ENCODE measurements at regions of chr6 and their contacts with region 1.

Region 1: DNA sequence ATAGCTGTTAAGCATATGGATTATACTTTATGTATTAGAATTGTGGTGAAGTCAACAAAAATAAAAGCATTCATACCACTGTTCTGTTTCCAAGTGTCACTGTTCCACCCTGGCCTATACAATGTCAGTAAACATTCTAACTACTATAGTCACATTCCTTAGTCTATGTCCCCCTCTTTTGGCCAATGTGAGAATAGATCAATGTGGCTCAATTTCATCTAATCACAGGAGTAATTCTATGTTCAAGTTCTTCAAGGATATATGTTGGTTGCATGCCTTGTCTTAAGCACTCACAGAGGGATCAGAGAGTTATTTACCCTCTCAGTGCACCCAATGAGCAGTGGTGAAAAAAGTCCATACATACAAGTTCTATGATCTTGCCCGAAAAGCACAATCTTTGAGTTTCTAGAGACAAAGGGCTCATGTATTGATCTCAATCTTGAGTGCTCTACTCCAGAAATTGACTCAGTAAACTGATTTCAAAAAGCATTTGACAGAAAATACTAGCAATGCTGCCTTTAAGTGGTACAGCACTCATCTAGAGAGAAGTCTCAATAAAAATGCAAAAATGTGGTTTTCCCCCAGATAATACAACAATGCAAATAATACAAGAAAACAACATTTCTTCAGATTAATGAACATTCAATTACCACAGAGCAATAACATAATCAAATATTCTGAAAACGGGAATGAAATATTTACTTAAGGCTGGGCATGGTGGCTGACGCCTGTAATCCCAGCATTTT is 16.5 kb downstream of the SMLR1 start:
- DNase-seq: peak in 1 of 2 donors; percentile 81
- ATAC-seq: peak; percentile 87 to 93 (median 92)
- H3K4me3 ChIP-seq: no peak overlapping the region
- H3K4me3 Mint-ChIP-seq: no peak overlapping the region
- H3K27ac ChIP-seq: no peak overlapping the region
- H3K27ac Mint-ChIP-seq: no peak overlapping the region
- H3K4me1 ChIP-seq: no peaks in the 10 kb centered on the region
- H3K4me1 Mint-ChIP-seq: peaks cover 2% of the 10 kb centered on the region in 2 donors
- H3K27me3 ChIP-seq: no peaks in the 10 kb centered on the region
- H3K27me3 Mint-ChIP-seq: no peaks in the 10 kb centered on the region
- CTCF ChIP-seq: peak; percentile 76

Region 2: GRCh38 chr6:129893640-129894039 is 950.1 kb before region 1 on chr6:
- intact Hi-C with region 1: loop called (anchors 5 kb)
- DNase-seq: peak in 1 of 2 donors; percentile 54
- ATAC-seq: peak in 1 of 3 donors; percentile 30
- H3K4me3 ChIP-seq: no peak overlapping the region
- H3K4me3 Mint-ChIP-seq: no peak overlapping the region
- H3K27ac ChIP-seq: no peak overlapping the region
- H3K27ac Mint-ChIP-seq: no peak overlapping the region
- H3K4me1 ChIP-seq: no peaks in the 10 kb centered on the region
- H3K4me1 Mint-ChIP-seq: no peaks in the 10 kb centered on the region
- H3K27me3 ChIP-seq: no peaks in the 10 kb centered on the region
- H3K27me3 Mint-ChIP-seq: peaks cover 0 to 3% of the 10 kb centered on the region in 2 donors
- CTCF ChIP-seq: peak; percentile 46

Region 3: DNA sequence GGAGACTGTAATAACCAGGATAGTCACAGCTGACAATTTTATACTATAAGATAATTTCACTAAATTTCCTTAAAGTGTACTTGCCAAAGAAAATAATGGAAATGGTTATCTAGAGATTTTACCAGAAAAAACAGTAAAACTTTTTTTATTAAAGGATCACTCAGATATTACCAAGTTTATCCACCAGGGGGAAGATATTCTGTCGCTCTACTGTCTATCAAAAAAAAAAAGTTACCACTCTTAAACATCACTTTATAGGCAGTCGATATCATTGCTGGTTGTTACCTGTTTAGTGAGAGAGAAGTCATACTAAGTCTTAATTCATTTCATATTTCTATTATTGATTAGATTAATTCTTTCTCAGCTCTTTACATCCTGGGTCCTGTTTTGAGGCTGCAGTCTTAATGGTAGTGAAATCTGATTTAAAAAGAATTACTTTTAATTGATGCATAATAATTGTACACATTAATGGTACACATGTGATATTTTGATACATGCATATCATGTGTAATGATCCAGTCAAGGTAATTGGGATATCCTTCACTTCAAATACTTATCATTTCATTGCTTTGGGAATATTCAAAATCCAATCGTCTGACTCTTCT is 806.4 kb before region 1 on chr6:
- intact Hi-C with region 1: loop called (anchors 10 kb)
- DNase-seq: peak in 1 of 2 donors; percentile 62
- ATAC-seq: peak in 2 of 3 donors; percentile 60 to 61
- H3K4me3 ChIP-seq: no peak overlapping the region
- H3K4me3 Mint-ChIP-seq: no peak overlapping the region
- H3K27ac ChIP-seq: no peak overlapping the region
- H3K27ac Mint-ChIP-seq: no peak overlapping the region
- H3K4me1 ChIP-seq: peaks cover 3% of the 10 kb centered on the region
- H3K4me1 Mint-ChIP-seq: peaks cover 25 to 36% of the 10 kb centered on the region in 2 donors
- H3K27me3 ChIP-seq: no peaks in the 10 kb centered on the region
- H3K27me3 Mint-ChIP-seq: no peaks in the 10 kb centered on the region
- CTCF ChIP-seq: peak; percentile 67

Region 4: DNA sequence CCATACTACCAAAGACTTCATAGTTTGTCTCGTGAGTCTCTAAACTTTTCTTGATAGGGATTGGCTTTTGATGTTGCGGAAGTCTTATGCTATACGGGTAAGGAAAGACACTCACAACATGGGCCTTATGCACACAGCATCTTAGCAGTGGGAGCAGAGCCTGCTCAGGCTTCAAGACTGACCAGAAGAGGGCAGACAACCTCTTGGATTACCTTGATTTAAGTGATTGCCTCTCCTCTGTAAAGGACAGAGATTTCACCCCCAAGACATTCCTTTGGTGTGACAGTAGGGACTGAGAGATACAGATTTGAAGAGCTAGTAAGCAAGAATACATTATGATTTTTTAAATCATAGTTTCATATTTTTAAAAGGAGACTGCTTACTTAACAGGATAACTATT is 549.9 kb before region 1 on chr6:
- intact Hi-C with region 1: loop called (anchors 1 kb)
- DNase-seq: peak in 1 of 2 donors; percentile 67
- ATAC-seq: peak; percentile 46 to 77 (median 69)
- H3K4me3 ChIP-seq: no peak overlapping the region
- H3K4me3 Mint-ChIP-seq: no peak overlapping the region
- H3K27ac ChIP-seq: no peak overlapping the region
- H3K27ac Mint-ChIP-seq: no peak overlapping the region
- H3K4me1 ChIP-seq: no peaks in the 10 kb centered on the region
- H3K4me1 Mint-ChIP-seq: no peaks in the 10 kb centered on the region
- H3K27me3 ChIP-seq: no peaks in the 10 kb centered on the region
- H3K27me3 Mint-ChIP-seq: peaks cover 9 to 17% of the 10 kb centered on the region in 2 donors
- CTCF ChIP-seq: peak; percentile 52

Region 5: GRCh38 chr6:130322673-130323268 is 521.0 kb before region 1 on chr6:
- intact Hi-C with region 1: loop called (anchors 1 kb)
- DNase-seq: peak; percentile 21 to 86
- ATAC-seq: peak in 2 of 3 donors; percentile 62 to 71
- H3K4me3 ChIP-seq: no peak overlapping the region
- H3K4me3 Mint-ChIP-seq: no peak overlapping the region
- H3K27ac ChIP-seq: no peak overlapping the region
- H3K27ac Mint-ChIP-seq: no peak overlapping the region
- H3K4me1 ChIP-seq: no peaks in the 10 kb centered on the region
- H3K4me1 Mint-ChIP-seq: no peaks in the 10 kb centered on the region
- H3K27me3 ChIP-seq: no peaks in the 10 kb centered on the region
- H3K27me3 Mint-ChIP-seq: peaks cover 5 to 8% of the 10 kb centered on the region in 2 donors
- CTCF ChIP-seq: peak; percentile 86

Region 6: GRCh38 chr6:130365166-130366106 is 478.3 kb before region 1 on chr6 and contains the start of gene TMEM200A:
- intact Hi-C with region 1: loop called (anchors 1 kb)
- DNase-seq: peak; percentile 35 to 58
- ATAC-seq: peak; percentile 45 to 76 (median 59)
- H3K4me3 ChIP-seq: peak within 1 kb of the TSS; percentile 71
- H3K4me3 Mint-ChIP-seq: peak within 1 kb of the TSS; percentile 83
- H3K27ac ChIP-seq: no peak within 1 kb of the TSS
- H3K27ac Mint-ChIP-seq: no peak within 1 kb of the TSS
- H3K4me1 ChIP-seq: peaks cover 15% of the 10 kb centered on the region
- H3K4me1 Mint-ChIP-seq: peaks cover 0 to 6% of the 10 kb centered on the region in 2 donors
- H3K27me3 ChIP-seq: peaks cover 13% of the 10 kb centered on the region
- H3K27me3 Mint-ChIP-seq: peaks cover 41 to 61% of the 10 kb centered on the region in 2 donors
- CTCF ChIP-seq: peak; percentile 67
- total RNA-seq, gene TMEM200A: 0.16 to 0.52 (median 0.50) TPM

Region 7: GRCh38 chr6:130997061-130997753 is 153.5 kb after region 1 on chr6:
- intact Hi-C with region 1: no loop called
- DNase-seq: no peak
- ATAC-seq: no peak
- H3K4me3 ChIP-seq: no peak overlapping the region
- H3K4me3 Mint-ChIP-seq: no peak overlapping the region
- H3K27ac ChIP-seq: no peak overlapping the region
- H3K27ac Mint-ChIP-seq: no peak overlapping the region
- H3K4me1 ChIP-seq: no peaks in the 10 kb centered on the region
- H3K4me1 Mint-ChIP-seq: no peaks in the 10 kb centered on the region
- H3K27me3 ChIP-seq: no peaks in the 10 kb centered on the region
- H3K27me3 Mint-ChIP-seq: peaks cover 7 to 20% of the 10 kb centered on the region in 2 donors
- CTCF ChIP-seq: no peak